GM12878 (cell line): ENCODE measurements at regions of chr16 and their contacts with region 1.

Region 1: GRCh38 chr16:74862741-74863244 is 88.2 kb upstream of the FA2H start:
- DNase-seq: peak; percentile 45
- ATAC-seq: peak; percentile 97
- H3K4me3 ChIP-seq: no peak overlapping the region
- H3K27ac ChIP-seq: no peak overlapping the region
- H3K4me1 ChIP-seq: no peaks in the 10 kb centered on the region
- H3K27me3 ChIP-seq: no peaks in the 10 kb centered on the region
- CTCF ChIP-seq: peak; percentile 64 to 91 (median 73)
- EP300 ChIP-seq: no peak
- POLR2A ChIP-seq: no peak
- RAD21 ChIP-seq: peak; percentile 93

Region 2: DNA sequence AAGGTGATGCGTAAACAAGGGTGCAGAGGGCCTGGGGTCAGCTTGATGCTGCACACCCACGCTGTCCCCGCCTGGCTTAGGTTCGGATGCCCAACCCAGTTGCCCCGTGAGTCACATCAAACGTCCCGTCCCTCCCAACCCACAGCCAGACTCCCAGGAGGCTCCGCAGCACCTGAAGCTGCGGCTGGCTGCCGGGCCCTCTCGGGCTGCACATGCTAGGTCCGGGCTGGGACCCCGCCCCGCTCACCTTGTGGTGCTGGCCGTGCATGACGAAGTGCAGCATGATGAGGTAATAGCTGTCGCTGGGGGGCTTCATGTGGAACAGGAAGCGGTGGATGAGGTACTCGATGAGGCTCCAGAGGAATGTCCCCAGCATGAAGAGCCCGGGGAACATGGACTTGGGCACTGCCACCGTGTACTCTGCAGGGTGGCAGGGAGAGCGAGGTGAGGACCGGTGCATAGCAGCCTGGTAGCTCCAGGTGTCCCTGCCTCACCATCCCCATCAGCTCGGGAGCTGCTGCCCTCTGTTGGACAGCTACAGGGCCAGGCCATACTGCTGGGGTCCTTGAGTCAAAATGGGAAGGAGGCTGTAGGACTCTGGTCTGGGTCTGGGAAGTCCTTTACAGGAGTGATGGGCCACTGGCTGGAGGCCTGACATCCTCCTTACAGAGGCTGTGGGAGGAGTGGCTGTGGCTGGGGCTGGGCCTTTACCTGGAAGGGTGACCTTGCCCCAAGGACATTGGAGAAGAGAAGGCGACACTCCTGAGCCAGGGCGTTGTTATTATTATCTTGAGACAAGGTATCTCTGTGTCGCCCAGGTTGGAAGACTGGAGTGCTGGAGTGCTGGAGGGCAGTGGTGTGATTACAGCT is 143.8 kb before region 1 on chr16:
- CTCF ChIA-PET with region 1: interaction called, 190 read pairs
- POLR2A ChIA-PET with region 1: no interaction called
- RAD21 ChIA-PET with region 1: interaction called, 62 read pairs
- SMC1A ChIA-PET with region 1: interaction called, 3 read pairs
- in situ Hi-C with region 1: loop called (anchors 5 kb)
- intact Hi-C with region 1: no loop called
- DNase-seq: no peak
- ATAC-seq: no peak; the same call in 2 of the 3 replicates
- H3K4me3 ChIP-seq: no peak overlapping the region
- H3K27ac ChIP-seq: no peak overlapping the region
- H3K4me1 ChIP-seq: no peaks in the 10 kb centered on the region
- H3K27me3 ChIP-seq: no peaks in the 10 kb centered on the region
- CTCF ChIP-seq: no peak
- EP300 ChIP-seq: no peak
- POLR2A ChIP-seq: no peak
- RAD21 ChIP-seq: no peak

Region 3: GRCh38 chr16:74813109-74813641 is 49.6 kb before region 1 on chr16:
- CTCF ChIA-PET with region 1: interaction called, 116 read pairs
- POLR2A ChIA-PET with region 1: no interaction called
- RAD21 ChIA-PET with region 1: interaction called, 81 read pairs
- SMC1A ChIA-PET with region 1: interaction called, 77 read pairs
- in situ Hi-C with region 1: no loop called
- intact Hi-C with region 1: loop called (anchors 1 kb)
- DNase-seq: peak; percentile 11
- ATAC-seq: peak; percentile 100
- H3K4me3 ChIP-seq: no peak overlapping the region; the same call in 1 of the 2 replicates
- H3K27ac ChIP-seq: no peak overlapping the region
- H3K4me1 ChIP-seq: no peaks in the 10 kb centered on the region
- H3K27me3 ChIP-seq: no peaks in the 10 kb centered on the region; a peak in 1 of 4 replicates
- CTCF ChIP-seq: peak; percentile 96 to 99 (median 98); a peak in 5 of 6 replicates
- EP300 ChIP-seq: no peak
- POLR2A ChIP-seq: no peak
- RAD21 ChIP-seq: peak; percentile 80

Region 4: DNA sequence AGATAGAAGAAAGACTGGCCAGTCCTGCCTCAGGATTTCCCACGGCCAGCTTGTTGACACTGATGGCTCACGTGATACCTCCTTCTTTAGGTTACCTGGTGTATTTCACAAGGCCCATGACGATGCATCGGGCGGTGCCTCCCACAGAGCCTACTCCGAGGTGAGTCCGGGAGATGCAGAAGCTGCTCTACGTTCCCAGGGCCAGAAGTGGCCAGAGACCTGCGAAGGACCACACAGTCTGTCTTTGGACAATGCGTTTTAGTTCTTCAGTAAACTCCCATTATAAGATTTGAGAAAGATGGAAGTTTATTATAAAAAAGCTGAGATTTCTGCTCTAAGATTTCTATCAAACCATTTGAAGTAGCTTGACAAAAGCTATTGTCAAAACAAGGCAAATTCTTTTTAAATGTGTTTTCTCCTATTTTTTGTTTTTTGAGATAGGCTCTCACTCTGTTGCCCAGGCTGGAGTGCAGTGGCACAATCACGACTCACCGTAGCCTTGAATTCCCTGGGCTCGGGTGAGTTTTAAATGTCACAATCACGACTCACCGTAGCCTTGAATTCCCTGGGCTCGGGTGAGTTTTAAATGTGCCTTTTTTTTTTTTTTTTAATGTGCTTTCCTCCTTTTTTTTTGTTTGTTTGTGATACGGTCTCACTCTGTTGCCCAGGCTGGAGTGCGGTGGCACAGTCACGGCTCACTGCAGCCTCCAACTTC is 18.9 kb before region 1 on chr16:
- CTCF ChIA-PET with region 1: interaction called, 20 read pairs
- POLR2A ChIA-PET with region 1: no interaction called
- RAD21 ChIA-PET with region 1: interaction called, 4 read pairs
- SMC1A ChIA-PET with region 1: interaction called, 9 read pairs
- in situ Hi-C with region 1: no loop called
- intact Hi-C with region 1: no loop called
- DNase-seq: no peak
- ATAC-seq: no peak
- H3K4me3 ChIP-seq: no peak overlapping the region
- H3K27ac ChIP-seq: no peak overlapping the region
- H3K4me1 ChIP-seq: peaks cover 3% of the 10 kb centered on the region
- H3K27me3 ChIP-seq: no peaks in the 10 kb centered on the region; a peak in 1 of 4 replicates
- CTCF ChIP-seq: no peak
- EP300 ChIP-seq: no peak
- POLR2A ChIP-seq: no peak
- RAD21 ChIP-seq: no peak

Region 5: DNA sequence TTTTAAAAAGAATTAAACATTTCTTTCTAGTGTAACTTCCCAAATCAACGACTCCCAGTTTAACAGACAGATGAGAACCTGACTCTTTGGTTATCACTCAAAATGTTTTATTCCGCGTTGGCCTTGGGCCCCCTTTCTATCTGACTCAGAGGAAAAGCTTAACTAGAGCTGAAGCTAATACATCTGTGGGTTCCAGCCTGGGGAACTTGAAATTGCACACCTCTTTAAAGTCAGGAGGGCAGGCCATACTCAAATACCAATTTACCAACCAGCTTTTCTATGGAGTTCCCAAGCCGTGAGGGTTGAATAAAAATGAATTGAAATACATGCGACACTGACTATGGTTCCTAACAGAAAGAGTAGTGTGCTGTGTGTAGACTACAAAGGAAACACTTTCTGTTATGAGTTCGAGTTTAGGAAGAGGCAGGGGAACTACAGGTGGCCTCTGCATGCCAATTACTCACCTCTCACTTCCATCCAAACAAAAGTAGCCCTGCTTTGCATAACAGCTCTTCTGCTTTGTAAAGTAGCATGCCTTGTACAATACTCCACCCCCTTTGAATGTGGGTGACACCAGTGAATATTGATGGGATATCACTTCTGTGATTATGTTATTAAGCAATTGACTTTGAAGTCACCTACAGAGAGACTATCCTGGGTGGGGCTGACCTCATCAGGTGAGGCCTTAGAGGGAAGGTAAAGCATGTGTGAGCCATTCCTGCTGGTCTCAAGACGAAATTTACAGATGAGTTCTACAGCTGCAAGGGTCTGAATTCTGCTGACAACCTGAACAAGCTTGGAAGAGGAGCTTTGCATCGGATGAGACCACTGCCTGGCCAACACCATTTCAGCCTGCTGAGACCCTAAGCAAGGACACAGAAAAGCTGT is 30.0 kb after region 1 on chr16:
- CTCF ChIA-PET with region 1: interaction called, 11 read pairs
- POLR2A ChIA-PET with region 1: no interaction called
- RAD21 ChIA-PET with region 1: no interaction called
- SMC1A ChIA-PET with region 1: interaction called, 9 read pairs
- in situ Hi-C with region 1: no loop called
- intact Hi-C with region 1: no loop called
- DNase-seq: peak; percentile 34
- ATAC-seq: peak; percentile 96
- H3K4me3 ChIP-seq: no peak overlapping the region
- H3K27ac ChIP-seq: peak overlapping the region; percentile 38; the same call in 1 of the 2 replicates
- H3K4me1 ChIP-seq: peaks cover 6% of the 10 kb centered on the region; the same call in 1 of the 2 replicates
- H3K27me3 ChIP-seq: no peaks in the 10 kb centered on the region
- CTCF ChIP-seq: no peak
- EP300 ChIP-seq: no peak
- POLR2A ChIP-seq: no peak
- RAD21 ChIP-seq: no peak

Region 6: GRCh38 chr16:75011634-75012307 is 149.0 kb after region 1 on chr16:
- CTCF ChIA-PET with region 1: interaction called, 3 read pairs
- POLR2A ChIA-PET with region 1: interaction called, 4 read pairs
- RAD21 ChIA-PET with region 1: no interaction called
- SMC1A ChIA-PET with region 1: interaction called, 10 read pairs
- in situ Hi-C with region 1: no loop called
- intact Hi-C with region 1: no loop called
- DNase-seq: peak; percentile 92
- ATAC-seq: peak; percentile 91
- H3K4me3 ChIP-seq: peak overlapping the region; percentile 60
- H3K27ac ChIP-seq: peak overlapping the region; percentile 96
- H3K4me1 ChIP-seq: peaks cover 47% of the 10 kb centered on the region
- H3K27me3 ChIP-seq: no peaks in the 10 kb centered on the region
- CTCF ChIP-seq: no peak
- EP300 ChIP-seq: peak; percentile 89
- POLR2A ChIP-seq: peak; percentile 64
- RAD21 ChIP-seq: no peak

Region 7: GRCh38 chr16:75025761-75026160 is 163.0 kb after region 1 on chr16:
- CTCF ChIA-PET with region 1: no interaction called
- POLR2A ChIA-PET with region 1: no interaction called
- RAD21 ChIA-PET with region 1: no interaction called
- SMC1A ChIA-PET with region 1: no interaction called
- in situ Hi-C with region 1: no loop called
- intact Hi-C with region 1: no loop called
- DNase-seq: no peak
- ATAC-seq: no peak
- H3K4me3 ChIP-seq: no peak overlapping the region
- H3K27ac ChIP-seq: no peak overlapping the region
- H3K4me1 ChIP-seq: peaks cover 20% of the 10 kb centered on the region
- H3K27me3 ChIP-seq: no peaks in the 10 kb centered on the region
- CTCF ChIP-seq: no peak
- EP300 ChIP-seq: no peak
- POLR2A ChIP-seq: no peak
- RAD21 ChIP-seq: no peak